ENCODE measurements at regions of chr1 and their contacts with region 1.

Region 1: GRCh38 chr1:201877877-201878401 is 10.8 kb upstream of the SHISA4 start:
- DNase-seq: peak; percentile 25 to 40 (median 39)
- H3K4me3 ChIP-seq: no peak overlapping the region
- H3K4me3 Mint-ChIP-seq: no peak overlapping the region
- H3K27ac ChIP-seq: peak overlapping the region in 1 of 2 donors; percentile 7
- H3K27ac Mint-ChIP-seq: peak overlapping the region in 3 of 7 donors; percentile 16 to 50 (median 37)
- H3K4me1 ChIP-seq: peaks cover 25% of the 10 kb centered on the region in 2 donors
- H3K4me1 Mint-ChIP-seq: peaks cover 22% of the 10 kb centered on the region
- H3K27me3 ChIP-seq: no peaks in the 10 kb centered on the region
- H3K27me3 Mint-ChIP-seq: peaks cover 0 to 3% (median 0%) of the 10 kb centered on the region in 3 donors
- CTCF ChIP-seq: peak; percentile 72

Region 2: DNA sequence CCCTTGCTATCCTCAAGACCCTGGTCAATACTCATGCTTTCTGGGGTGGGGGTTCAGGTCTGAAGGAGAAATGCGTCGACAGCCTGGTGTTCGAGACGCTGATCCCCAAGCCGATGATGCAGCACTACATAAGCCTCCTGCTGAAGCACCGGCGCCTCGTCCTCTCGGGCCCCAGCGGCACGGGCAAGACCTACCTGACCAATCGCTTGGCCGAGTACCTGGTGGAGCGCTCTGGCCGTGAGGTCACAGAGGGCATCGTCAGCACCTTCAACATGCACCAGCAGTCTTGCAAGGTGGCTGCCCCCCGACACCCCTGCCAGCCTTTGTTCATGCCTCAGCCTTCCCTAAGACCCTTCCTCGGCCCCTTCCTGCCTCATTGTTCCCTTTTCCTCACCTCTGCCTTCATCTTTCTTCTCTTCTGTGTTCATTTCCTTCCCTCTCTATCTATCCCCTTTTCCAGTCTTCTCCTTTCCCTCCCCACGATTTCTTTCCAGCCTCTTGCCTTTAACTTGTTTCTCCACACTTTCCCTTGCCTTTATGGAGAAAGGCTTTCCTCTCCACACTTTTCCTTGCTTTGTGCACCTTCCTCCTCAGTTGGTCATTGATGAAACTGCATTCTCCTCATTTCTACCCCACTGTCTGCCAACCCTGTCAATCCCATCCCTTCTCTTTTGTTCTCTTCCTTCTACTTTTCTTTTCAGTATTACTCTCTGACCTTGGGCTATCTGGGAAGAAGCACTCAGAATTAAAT is 67.3 kb before region 1 on chr1:
- intact Hi-C with region 1: no loop called
- DNase-seq: no peak
- H3K4me3 ChIP-seq: no peak overlapping the region
- H3K4me3 Mint-ChIP-seq: no peak overlapping the region
- H3K27ac ChIP-seq: no peak overlapping the region
- H3K27ac Mint-ChIP-seq: no peak overlapping the region
- H3K4me1 ChIP-seq: no peaks in the 10 kb centered on the region
- H3K4me1 Mint-ChIP-seq: no peaks in the 10 kb centered on the region
- H3K27me3 ChIP-seq: no peaks in the 10 kb centered on the region
- H3K27me3 Mint-ChIP-seq: peaks cover 0 to 2% (median 0%) of the 10 kb centered on the region in 3 donors
- CTCF ChIP-seq: no peak

Region 3: GRCh38 chr1:201828820-201829774 is 48.8 kb before region 1 on chr1 and contains the start of gene IPO9:
- intact Hi-C with region 1: loop called in 1 of 2 experiments (anchors 5 kb)
- DNase-seq: peak; percentile 89 to 91 (median 90)
- H3K4me3 ChIP-seq: peak within 1 kb of the TSS; percentile 72 to 100 (median 92)
- H3K4me3 Mint-ChIP-seq: peak within 1 kb of the TSS; percentile 97 to 98
- H3K27ac ChIP-seq: peak within 1 kb of the TSS; percentile 90 to 97
- H3K27ac Mint-ChIP-seq: peak within 1 kb of the TSS; percentile 96 to 99 (median 98)
- H3K4me1 ChIP-seq: peaks cover 12 to 20% of the 10 kb centered on the region in 2 donors
- H3K4me1 Mint-ChIP-seq: peaks cover 37% of the 10 kb centered on the region
- H3K27me3 ChIP-seq: no peaks in the 10 kb centered on the region
- H3K27me3 Mint-ChIP-seq: no peaks in the 10 kb centered on the region
- CTCF ChIP-seq: peak; percentile 95
- polyA plus RNA-seq, gene IPO9: 11.3 to 12.6 (median 12.0) TPM

Region 4: DNA sequence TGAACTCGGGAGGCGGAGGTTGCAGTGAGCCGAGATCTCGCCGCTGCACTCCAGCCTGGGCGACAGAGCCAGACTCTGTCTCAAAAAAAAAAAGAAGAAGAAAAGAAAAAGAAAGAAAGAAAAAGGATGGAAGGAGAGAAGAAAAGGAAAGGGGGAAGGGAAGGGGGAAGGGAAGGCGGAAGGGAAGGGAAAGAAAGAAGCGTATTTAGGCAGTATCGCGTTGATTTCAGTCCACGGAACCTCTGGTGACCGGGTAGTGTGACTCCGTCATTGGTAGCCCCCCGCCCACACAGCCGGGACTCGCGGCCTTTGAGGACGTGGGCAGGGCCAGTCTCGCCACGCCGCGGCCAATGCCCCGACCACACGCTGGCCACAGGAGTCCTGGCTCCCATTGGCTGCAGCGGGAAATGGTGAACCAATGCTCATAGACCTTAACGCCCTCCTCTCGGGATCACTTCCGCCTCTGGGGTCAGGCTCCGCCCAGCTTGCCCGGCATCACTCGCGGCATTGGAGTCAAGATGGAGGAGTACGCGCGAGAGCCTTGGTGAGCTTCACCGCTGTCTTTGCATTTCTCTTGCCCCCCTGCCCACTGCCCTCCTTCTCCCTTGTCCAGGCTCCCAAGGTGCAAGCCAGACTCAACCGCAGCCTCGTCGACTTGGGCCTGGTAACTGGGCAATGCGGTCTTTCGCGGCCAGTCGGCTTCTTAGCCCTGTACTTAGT is 77.2 kb after region 1 on chr1 and contains the start of gene TIMM17A:
- intact Hi-C with region 1: loop called in 1 of 2 experiments (anchors 2 kb)
- DNase-seq: peak; percentile 97 to 99 (median 98)
- H3K4me3 ChIP-seq: peak within 1 kb of the TSS; percentile 68 to 93 (median 73)
- H3K4me3 Mint-ChIP-seq: peak within 1 kb of the TSS; percentile 94 to 99
- H3K27ac ChIP-seq: peak within 1 kb of the TSS; percentile 73 to 97
- H3K27ac Mint-ChIP-seq: peak within 1 kb of the TSS; percentile 97 to 99 (median 98)
- H3K4me1 ChIP-seq: peaks cover 11 to 14% of the 10 kb centered on the region in 2 donors
- H3K4me1 Mint-ChIP-seq: peaks cover 15% of the 10 kb centered on the region
- H3K27me3 ChIP-seq: no peaks in the 10 kb centered on the region
- H3K27me3 Mint-ChIP-seq: peaks cover 0 to 2% (median 0%) of the 10 kb centered on the region in 3 donors
- CTCF ChIP-seq: no peak
- polyA plus RNA-seq, gene TIMM17A: 27.4 to 50.3 (median 45.4) TPM

Region 5: DNA sequence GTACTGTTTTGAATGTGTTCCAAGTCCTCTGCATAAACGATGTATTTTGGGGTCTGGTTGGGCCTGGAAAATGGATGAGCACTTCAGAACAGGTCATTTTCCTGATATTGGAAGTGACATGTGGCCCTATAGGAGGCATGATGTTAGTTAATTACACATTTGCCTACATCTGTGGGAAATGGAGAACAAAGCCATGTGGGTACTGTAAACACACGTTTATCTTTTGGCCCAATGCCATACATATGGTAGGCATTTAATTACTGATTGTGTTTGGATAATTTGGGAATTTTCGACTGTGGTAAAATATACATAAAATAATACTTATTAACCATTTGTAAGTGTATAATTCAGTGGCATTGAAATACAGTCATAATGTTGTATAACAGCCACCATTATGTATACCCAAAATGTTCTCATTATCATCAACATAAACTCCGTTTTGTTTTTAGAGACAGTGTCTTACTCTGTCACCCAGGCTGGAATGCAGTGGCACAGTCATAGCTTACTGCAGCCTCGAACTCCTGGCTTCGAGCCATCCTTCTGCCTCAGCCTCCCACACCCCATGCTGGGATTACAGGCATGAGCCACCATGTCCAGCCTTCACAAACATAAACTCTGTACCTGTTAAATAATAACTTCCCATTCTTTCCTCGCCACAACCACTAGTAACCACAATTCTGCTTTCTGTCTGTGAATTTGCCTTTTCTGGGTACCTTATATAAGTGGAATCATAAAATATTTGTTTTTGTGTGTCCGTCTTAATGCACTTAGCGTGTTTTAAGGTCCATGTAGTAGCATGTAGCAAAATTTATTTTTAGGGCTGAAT is 92.6 kb after region 1 on chr1:
- intact Hi-C with region 1: loop called (anchors 5 kb)
- DNase-seq: no peak
- H3K4me3 ChIP-seq: no peak overlapping the region
- H3K4me3 Mint-ChIP-seq: no peak overlapping the region
- H3K27ac ChIP-seq: no peak overlapping the region
- H3K27ac Mint-ChIP-seq: no peak overlapping the region
- H3K4me1 ChIP-seq: no peaks in the 10 kb centered on the region
- H3K4me1 Mint-ChIP-seq: peaks cover 1% of the 10 kb centered on the region
- H3K27me3 ChIP-seq: no peaks in the 10 kb centered on the region
- H3K27me3 Mint-ChIP-seq: peaks cover 4 to 9% (median 8%) of the 10 kb centered on the region in 3 donors
- CTCF ChIP-seq: no peak

Measured in CD14-positive monocyte (primary cell).